ENCODE measurements at regions of chr22 and their contacts with region 1.

Region 1: DNA sequence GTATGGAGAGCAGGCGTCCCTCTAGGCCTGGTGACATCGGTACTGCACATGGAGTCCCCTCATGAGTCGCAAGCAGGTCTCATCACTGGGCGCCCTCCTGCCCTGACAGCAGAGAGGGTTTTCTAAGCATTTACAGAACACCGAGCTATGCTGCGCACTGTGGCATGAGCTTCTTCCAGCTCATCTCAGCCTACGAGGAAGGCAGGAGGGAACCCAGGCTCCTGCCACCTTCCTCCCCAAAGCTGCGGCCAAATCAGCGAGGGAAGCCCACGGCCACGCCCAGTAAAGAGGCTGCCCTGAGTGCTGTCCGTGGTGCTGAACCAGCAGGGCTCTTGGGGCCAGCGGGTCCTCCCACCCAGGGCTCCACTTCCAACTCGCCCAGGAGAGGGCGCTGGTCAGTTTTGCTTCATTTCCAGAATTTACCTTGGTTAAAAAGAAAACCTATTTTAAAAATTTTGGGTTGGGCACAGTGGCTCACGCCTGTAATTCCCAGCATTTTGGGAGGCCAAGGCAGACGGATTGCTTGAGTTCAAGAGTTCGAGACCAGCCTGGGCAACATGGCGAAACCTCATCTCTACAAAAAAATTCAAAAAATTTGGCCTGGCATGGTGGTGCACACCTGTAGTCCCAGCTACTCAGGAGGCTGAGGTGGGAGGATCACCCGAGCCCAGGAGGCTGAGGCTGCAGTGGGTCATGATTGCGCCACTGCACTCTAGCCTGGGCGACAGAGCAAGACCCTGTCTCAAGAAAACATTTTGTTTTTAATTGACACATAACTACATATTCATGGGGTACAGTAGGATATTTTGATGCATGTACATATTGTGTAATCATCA is 34.2 kb downstream of the PHF21B start:
- DNase-seq: peak; percentile 92
- ATAC-seq: peak; percentile 95
- H3K4me3 Mint-ChIP-seq: no peak overlapping the region
- H3K27ac Mint-ChIP-seq: no peak overlapping the region
- H3K4me1 Mint-ChIP-seq: no peaks in the 10 kb centered on the region
- H3K27me3 Mint-ChIP-seq: peaks cover 16% of the 10 kb centered on the region

Region 2: GRCh38 chr22:44819971-44820631 is 155.5 kb before region 1 on chr22:
- CTCF ChIA-PET with region 1: no interaction called
- POLR2A ChIA-PET with region 1: no interaction called
- intact Hi-C with region 1: loop called in 1 of 2 experiments (anchors 5 kb)
- DNase-seq: no peak
- ATAC-seq: no peak
- H3K4me3 Mint-ChIP-seq: no peak overlapping the region
- H3K27ac Mint-ChIP-seq: no peak overlapping the region
- H3K4me1 Mint-ChIP-seq: no peaks in the 10 kb centered on the region
- H3K27me3 Mint-ChIP-seq: peaks cover 1% of the 10 kb centered on the region

Region 3: GRCh38 chr22:45009881-45010531 is 34.4 kb after region 1 on chr22 and contains the start of gene PHF21B:
- CTCF ChIA-PET with region 1: no interaction called
- POLR2A ChIA-PET with region 1: no interaction called
- intact Hi-C with region 1: loop called in 1 of 2 experiments (anchors 1 kb)
- DNase-seq: peak; percentile 49
- ATAC-seq: peak; percentile 45
- H3K4me3 Mint-ChIP-seq: peak within 1 kb of the TSS; percentile 72
- H3K27ac Mint-ChIP-seq: no peak within 1 kb of the TSS
- H3K4me1 Mint-ChIP-seq: peaks cover 15% of the 10 kb centered on the region
- H3K27me3 Mint-ChIP-seq: peaks cover 51% of the 10 kb centered on the region
- total RNA-seq, gene PHF21B: not detected

Region 4: GRCh38 chr22:45051419-45051818 is 75.8 kb after region 1 on chr22:
- CTCF ChIA-PET with region 1: no interaction called
- POLR2A ChIA-PET with region 1: no interaction called
- intact Hi-C with region 1: no loop called
- DNase-seq: no peak
- ATAC-seq: no peak
- H3K4me3 Mint-ChIP-seq: no peak overlapping the region
- H3K27ac Mint-ChIP-seq: no peak overlapping the region
- H3K4me1 Mint-ChIP-seq: no peaks in the 10 kb centered on the region
- H3K27me3 Mint-ChIP-seq: peaks cover 26% of the 10 kb centered on the region

Region 5: DNA sequence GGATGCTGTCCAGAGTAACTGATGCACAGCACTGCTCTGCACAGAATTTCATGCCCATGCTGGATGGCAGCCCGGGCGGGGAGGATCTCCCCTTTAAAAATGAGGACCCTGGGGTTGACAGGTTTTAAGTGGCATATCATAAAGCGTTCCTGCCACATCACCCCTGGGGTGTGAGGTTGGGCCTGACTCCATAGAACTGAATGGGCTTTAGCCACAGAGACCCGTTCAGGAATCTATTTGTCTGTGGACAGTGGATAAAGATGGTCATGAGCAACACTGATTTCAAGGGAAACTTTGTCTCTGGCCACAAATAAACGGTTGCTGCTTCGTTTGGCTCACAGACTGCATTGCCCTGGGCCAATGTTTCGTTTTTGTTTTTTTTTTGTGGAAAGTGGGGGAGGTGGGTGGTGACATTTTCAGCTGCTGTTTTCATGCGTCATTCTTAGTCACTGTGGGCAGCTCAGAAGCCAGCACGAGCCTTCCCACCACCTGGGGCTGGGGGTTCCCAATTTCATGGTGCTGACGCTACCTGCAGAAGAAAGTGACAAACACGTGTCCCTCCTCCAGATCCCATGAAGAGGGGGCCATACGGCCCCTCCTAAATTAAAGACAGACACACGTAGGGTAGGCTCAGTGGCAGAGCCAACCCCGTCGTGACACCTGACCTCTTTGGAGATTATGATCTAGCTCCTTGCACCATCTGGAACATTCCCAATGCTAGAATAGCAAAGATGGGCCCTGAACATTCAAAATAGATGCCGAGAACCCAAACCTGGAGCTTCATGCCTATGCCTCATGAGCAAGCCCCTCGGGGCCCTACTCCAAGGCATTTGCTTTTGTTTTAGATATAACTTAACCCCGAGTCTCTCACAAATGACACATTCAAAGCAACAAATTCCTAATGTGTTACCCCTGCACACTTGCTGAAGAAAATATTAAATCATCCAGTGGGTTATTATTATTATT is 89.0 kb after region 1 on chr22:
- CTCF ChIA-PET with region 1: no interaction called
- POLR2A ChIA-PET with region 1: no interaction called
- intact Hi-C with region 1: loop called in 1 of 2 experiments (anchors 1 kb)
- DNase-seq: peak; percentile 86
- ATAC-seq: peak; percentile 95
- H3K4me3 Mint-ChIP-seq: no peak overlapping the region
- H3K27ac Mint-ChIP-seq: peak overlapping the region; percentile 76
- H3K4me1 Mint-ChIP-seq: peaks cover 14% of the 10 kb centered on the region
- H3K27me3 Mint-ChIP-seq: peaks cover 6% of the 10 kb centered on the region

Region 6: DNA sequence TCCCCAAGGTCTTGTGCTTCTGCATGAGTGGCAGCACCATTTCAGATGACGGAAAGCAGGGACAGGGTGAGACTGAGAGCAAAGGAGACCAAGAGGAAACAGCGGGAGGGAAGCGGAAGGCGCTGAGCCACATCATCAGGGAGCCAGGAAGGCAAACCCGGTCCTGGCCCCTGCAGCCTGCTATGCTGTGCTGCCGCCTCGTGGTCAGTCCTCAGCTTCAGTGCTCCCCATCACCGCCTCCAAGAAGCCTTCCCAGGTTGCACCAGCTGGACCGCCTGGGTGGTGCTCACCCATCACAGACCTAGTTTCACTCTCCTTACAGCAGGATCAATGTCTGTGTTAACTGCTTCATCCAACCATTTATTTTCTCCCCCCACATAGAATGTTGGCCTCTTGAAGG is 107.2 kb after region 1 on chr22:
- CTCF ChIA-PET with region 1: interaction called, 4 read pairs
- POLR2A ChIA-PET with region 1: no interaction called
- intact Hi-C with region 1: loop called (anchors 5 kb)
- DNase-seq: peak; percentile 62
- ATAC-seq: no peak
- H3K4me3 Mint-ChIP-seq: no peak overlapping the region
- H3K27ac Mint-ChIP-seq: no peak overlapping the region
- H3K4me1 Mint-ChIP-seq: peaks cover 22% of the 10 kb centered on the region
- H3K27me3 Mint-ChIP-seq: peaks cover 39% of the 10 kb centered on the region

Region 7: GRCh38 chr22:45096256-45096907 is 120.7 kb after region 1 on chr22:
- CTCF ChIA-PET with region 1: no interaction called
- POLR2A ChIA-PET with region 1: interaction called, 3 read pairs
- intact Hi-C with region 1: loop called (anchors 1 to 5 kb)
- DNase-seq: peak; percentile 72
- ATAC-seq: peak; percentile 77
- H3K4me3 Mint-ChIP-seq: no peak overlapping the region
- H3K27ac Mint-ChIP-seq: no peak overlapping the region
- H3K4me1 Mint-ChIP-seq: peaks cover 5% of the 10 kb centered on the region
- H3K27me3 Mint-ChIP-seq: peaks cover 24% of the 10 kb centered on the region

Region 8: DNA sequence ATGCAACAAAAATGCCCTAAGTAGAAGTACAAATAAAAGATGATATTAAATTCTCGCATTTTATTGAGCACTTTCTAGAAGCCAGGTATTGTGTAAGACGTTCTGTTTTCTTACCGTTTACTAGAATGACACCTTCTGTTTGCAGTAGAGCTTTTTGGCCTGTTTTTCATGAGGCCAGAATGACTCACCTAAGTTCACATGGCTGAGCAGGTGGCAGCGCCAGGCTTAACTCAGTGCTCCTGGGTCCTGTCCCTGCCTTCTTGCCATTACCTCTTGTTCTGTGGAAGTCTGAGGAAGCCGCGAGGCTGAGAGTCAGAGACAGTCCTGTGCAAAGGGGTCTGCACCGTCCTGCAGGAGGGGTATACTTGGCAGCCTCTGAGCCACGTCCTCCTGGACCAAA is 809.8 kb after region 1 on chr22:
- CTCF ChIA-PET with region 1: no interaction called
- POLR2A ChIA-PET with region 1: no interaction called
- intact Hi-C with region 1: no loop called
- DNase-seq: no peak
- ATAC-seq: no peak
- H3K4me3 Mint-ChIP-seq: no peak overlapping the region
- H3K27ac Mint-ChIP-seq: no peak overlapping the region
- H3K4me1 Mint-ChIP-seq: no peaks in the 10 kb centered on the region
- H3K27me3 Mint-ChIP-seq: no peaks in the 10 kb centered on the region